Ovary (tissue), 10 donors: ENCODE measurements at regions of chr22 and their contacts with region 1.

Region 1: DNA sequence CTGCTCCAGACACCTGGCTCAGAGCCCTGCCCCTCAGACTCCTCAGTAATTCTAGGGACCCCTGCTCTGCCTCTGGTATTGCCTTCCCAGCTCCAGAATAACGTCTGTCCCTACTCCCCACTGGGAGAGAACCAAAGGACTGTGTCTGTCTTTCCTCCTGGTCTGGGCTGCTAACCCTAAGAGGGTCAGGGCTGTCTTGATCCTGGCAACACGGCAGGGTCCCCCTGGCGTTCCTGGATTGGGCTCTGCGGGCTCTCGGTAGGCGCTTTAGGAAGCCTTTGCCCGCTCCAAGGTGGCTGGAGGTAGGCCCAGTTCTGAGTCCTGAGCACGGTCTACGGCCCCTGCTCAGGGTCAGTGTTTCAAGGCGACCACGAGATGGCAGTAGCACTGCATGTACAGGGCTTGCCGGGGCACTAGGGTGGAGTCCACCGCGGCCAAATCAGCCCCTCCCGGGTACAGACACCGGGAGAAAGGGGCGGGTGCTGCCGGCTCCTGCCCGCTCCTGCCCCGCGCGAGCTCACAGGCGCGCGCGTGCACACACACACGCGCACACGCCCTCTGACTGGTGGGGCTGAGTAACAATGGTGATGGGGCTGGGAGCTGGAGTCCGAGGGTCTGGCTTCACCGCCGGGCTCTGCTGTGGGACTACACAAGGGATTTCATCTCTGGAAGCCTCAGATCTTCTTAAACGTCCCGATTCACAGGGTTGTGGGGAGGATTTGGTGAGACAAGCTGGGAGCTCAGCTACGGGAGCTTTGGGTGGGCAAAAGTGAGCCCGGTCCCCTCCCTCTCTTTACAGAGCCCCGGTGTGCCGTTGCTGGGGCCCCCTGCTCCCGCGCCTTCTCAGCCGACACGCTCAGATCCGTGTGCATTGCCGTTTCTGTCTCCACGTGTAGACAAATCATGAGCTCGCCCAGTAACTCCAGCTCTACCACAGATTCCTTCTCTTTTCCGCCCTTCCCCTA is 30.1 kb upstream of the HMOX1 start:
- DNase-seq: peak; percentile 95 to 97 (median 95)
- H3K4me3 ChIP-seq: peak overlapping the region; percentile 42
- H3K27ac ChIP-seq: peak overlapping the region; percentile 53 to 92
- H3K4me1 ChIP-seq: peaks cover 9% of the 10 kb centered on the region
- H3K27me3 ChIP-seq: no peaks in the 10 kb centered on the region
- CTCF ChIP-seq: peak; percentile 96 to 97 (median 96)
- EP300 ChIP-seq: no peak
- POLR2A ChIP-seq: peak; percentile 55

Region 2: GRCh38 chr22:35589071-35589952 is 238.5 kb after region 1 on chr22:
- intact Hi-C with region 1: loop called (anchors 5 kb)
- DNase-seq: peak in 3 of 5 donors; percentile 39 to 66 (median 52)
- H3K4me3 ChIP-seq: no peak overlapping the region
- H3K27ac ChIP-seq: no peak overlapping the region
- H3K4me1 ChIP-seq: peaks cover 2% of the 10 kb centered on the region
- H3K27me3 ChIP-seq: no peaks in the 10 kb centered on the region
- CTCF ChIP-seq: no peak
- EP300 ChIP-seq: no peak
- POLR2A ChIP-seq: no peak

Region 3: GRCh38 chr22:35622191-35622913 is 271.5 kb after region 1 on chr22:
- intact Hi-C with region 1: loop called in 2 of 4 experiments (anchors 2 to 10 kb)
- DNase-seq: peak in 1 of 5 donors; percentile 46
- H3K4me3 ChIP-seq: no peak overlapping the region
- H3K27ac ChIP-seq: no peak overlapping the region
- H3K4me1 ChIP-seq: peaks cover 1% of the 10 kb centered on the region
- H3K27me3 ChIP-seq: no peaks in the 10 kb centered on the region
- CTCF ChIP-seq: no peak
- EP300 ChIP-seq: no peak
- POLR2A ChIP-seq: no peak